MCF 10A (cell line): ENCODE measurements at regions of chr3 and their contacts with region 1.

Region 1: GRCh38 chr3:149480325-149481017 is 6.0 kb downstream of the TM4SF4 start:
- DNase-seq: peak; percentile 88
- H3K4me3 Mint-ChIP-seq: no peak overlapping the region
- H3K27ac Mint-ChIP-seq: no peak overlapping the region
- H3K4me1 Mint-ChIP-seq: no peaks in the 10 kb centered on the region
- H3K27me3 Mint-ChIP-seq: no peaks in the 10 kb centered on the region
- CTCF ChIP-seq: peak; percentile 88

Region 2: DNA sequence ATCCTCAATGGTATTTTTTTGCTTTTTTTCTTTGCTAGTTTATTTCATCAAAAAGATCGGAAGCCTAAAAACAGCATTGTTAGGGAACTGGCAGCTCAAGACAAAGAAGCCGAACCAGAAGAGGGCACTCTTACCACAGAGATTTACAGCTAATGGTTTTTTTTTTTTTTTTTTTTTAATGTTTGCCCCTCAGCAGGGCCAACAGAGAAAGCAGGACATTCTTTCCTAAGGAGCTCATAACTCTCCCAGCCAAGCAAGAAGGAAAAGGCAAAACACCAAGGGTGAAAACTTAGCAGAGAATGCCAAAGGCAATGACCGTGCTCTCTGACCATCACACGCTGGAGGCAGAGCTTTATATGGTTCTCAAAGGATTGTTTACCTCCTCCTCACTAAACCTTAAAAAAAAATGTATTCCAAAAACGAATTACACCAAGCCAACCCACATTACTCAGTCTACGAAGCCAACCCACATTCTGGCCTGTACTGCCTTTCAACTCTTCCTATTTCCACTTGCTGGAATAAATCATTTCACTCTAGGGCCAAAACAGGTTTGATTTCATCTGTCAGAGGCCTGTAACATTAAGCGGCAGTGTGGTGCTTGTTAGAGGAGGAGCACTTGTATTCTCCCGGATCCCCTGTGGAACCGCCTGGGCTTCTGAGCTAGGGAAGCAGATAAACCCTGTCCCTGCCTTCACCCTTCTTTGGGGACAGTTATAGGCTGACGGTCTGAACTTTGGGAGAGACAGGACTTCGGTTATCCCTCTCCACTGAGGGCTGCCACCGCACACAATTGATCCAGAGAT is 524.7 kb before region 1 on chr3:
- CTCF ChIA-PET with region 1: interaction called, 4 read pairs
- POLR2A ChIA-PET with region 1: no interaction called
- intact Hi-C with region 1: loop called (anchors 2 kb)
- DNase-seq: peak; percentile 66
- H3K4me3 Mint-ChIP-seq: no peak overlapping the region
- H3K27ac Mint-ChIP-seq: no peak overlapping the region
- H3K4me1 Mint-ChIP-seq: no peaks in the 10 kb centered on the region
- H3K27me3 Mint-ChIP-seq: peaks cover 13% of the 10 kb centered on the region
- CTCF ChIP-seq: peak; percentile 54

Region 3: GRCh38 chr3:149352556-149352955 is 127.9 kb before region 1 on chr3:
- CTCF ChIA-PET with region 1: interaction called, 155 read pairs
- POLR2A ChIA-PET with region 1: interaction called, 3 read pairs
- intact Hi-C with region 1: loop called (anchors 1 kb)
- DNase-seq: peak; percentile 79
- H3K4me3 Mint-ChIP-seq: no peak overlapping the region
- H3K27ac Mint-ChIP-seq: no peak overlapping the region
- H3K4me1 Mint-ChIP-seq: no peaks in the 10 kb centered on the region
- H3K27me3 Mint-ChIP-seq: no peaks in the 10 kb centered on the region
- CTCF ChIP-seq: peak; percentile 89

Region 4: GRCh38 chr3:149366941-149367840 is 113.3 kb before region 1 on chr3:
- CTCF ChIA-PET with region 1: interaction called, 11 read pairs
- POLR2A ChIA-PET with region 1: interaction called, 21 read pairs
- intact Hi-C with region 1: no loop called
- DNase-seq: peak; percentile 90
- H3K4me3 Mint-ChIP-seq: no peak overlapping the region
- H3K27ac Mint-ChIP-seq: peak overlapping the region; percentile 77
- H3K4me1 Mint-ChIP-seq: peaks cover 31% of the 10 kb centered on the region
- H3K27me3 Mint-ChIP-seq: no peaks in the 10 kb centered on the region
- CTCF ChIP-seq: no peak

Region 5: GRCh38 chr3:149393345-149394160 is 86.9 kb before region 1 on chr3:
- CTCF ChIA-PET with region 1: interaction called, 78 read pairs
- POLR2A ChIA-PET with region 1: no interaction called
- intact Hi-C with region 1: loop called (anchors 1 kb)
- DNase-seq: peak; percentile 84
- H3K4me3 Mint-ChIP-seq: no peak overlapping the region
- H3K27ac Mint-ChIP-seq: no peak overlapping the region
- H3K4me1 Mint-ChIP-seq: peaks cover 26% of the 10 kb centered on the region
- H3K27me3 Mint-ChIP-seq: no peaks in the 10 kb centered on the region
- CTCF ChIP-seq: peak; percentile 79

Region 6: GRCh38 chr3:149494022-149494758 is 13.7 kb after region 1 on chr3:
- CTCF ChIA-PET with region 1: interaction called, 16 read pairs
- POLR2A ChIA-PET with region 1: no interaction called
- intact Hi-C with region 1: no loop called
- DNase-seq: peak; percentile 73
- H3K4me3 Mint-ChIP-seq: no peak overlapping the region
- H3K27ac Mint-ChIP-seq: no peak overlapping the region
- H3K4me1 Mint-ChIP-seq: no peaks in the 10 kb centered on the region
- H3K27me3 Mint-ChIP-seq: peaks cover 15% of the 10 kb centered on the region
- CTCF ChIP-seq: peak; percentile 77

Region 7: GRCh38 chr3:149609595-149609994 is 129.1 kb after region 1 on chr3:
- CTCF ChIA-PET with region 1: no interaction called
- POLR2A ChIA-PET with region 1: no interaction called
- intact Hi-C with region 1: no loop called
- DNase-seq: no peak
- H3K4me3 Mint-ChIP-seq: no peak overlapping the region
- H3K27ac Mint-ChIP-seq: no peak overlapping the region
- H3K4me1 Mint-ChIP-seq: peaks cover 20% of the 10 kb centered on the region
- H3K27me3 Mint-ChIP-seq: no peaks in the 10 kb centered on the region
- CTCF ChIP-seq: no peak